GM10248 (cell line): ENCODE measurements at regions of chr11 and their contacts with region 1.

Region 1: DNA sequence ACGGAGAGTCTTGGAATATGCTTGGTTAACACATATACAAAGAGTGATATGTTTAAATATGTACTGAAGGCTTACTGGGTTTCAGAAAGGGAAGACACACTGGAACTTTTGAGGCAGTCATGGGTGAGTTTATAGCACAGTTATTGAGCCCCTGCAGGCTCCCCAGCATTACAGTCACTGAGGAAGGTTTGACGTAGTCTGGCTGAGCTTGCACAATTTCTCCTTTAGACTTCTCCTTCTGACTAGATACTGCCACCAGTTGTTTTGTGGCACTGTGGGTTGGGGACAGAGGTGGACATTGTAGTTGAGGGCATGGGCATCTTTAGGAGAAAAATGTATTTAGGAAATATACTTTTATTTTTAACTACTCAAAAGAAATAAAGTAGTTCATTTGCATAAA is 285.4 kb downstream of the C11orf87 start:
- DNase-seq: no peak
- CTCF ChIP-seq: no peak

Region 2: GRCh38 chr11:109697140-109697843 is 10.1 kb before region 1 on chr11:
- CTCF ChIA-PET with region 1: interaction called, 12 read pairs
- POLR2A ChIA-PET with region 1: no interaction called
- DNase-seq: peak; percentile 23
- CTCF ChIP-seq: peak; percentile 49